ENCODE measurements at regions of chr6 and their contacts with region 1.

Region 1: DNA sequence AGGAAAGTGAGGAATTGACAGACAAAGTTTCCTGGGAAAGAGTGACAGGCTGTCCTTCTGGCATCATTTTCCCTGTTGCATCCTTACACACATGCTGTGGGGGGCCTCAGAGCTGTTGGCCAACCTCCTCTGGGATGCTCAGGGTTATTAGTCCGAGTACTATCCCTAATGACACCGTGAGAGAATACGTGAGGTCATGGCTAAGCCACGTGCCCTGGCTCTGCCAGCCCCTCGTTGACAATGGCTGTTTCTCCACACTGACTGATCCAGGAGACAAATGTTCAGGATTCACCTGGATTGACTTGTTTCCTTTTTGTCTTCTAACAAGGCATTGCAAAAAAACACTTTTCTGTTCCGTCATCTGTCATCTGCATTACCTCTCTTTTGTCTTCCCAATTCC is 604.6 kb downstream of the TFAP2A start:
- DNase-seq: no peak

Region 2: DNA sequence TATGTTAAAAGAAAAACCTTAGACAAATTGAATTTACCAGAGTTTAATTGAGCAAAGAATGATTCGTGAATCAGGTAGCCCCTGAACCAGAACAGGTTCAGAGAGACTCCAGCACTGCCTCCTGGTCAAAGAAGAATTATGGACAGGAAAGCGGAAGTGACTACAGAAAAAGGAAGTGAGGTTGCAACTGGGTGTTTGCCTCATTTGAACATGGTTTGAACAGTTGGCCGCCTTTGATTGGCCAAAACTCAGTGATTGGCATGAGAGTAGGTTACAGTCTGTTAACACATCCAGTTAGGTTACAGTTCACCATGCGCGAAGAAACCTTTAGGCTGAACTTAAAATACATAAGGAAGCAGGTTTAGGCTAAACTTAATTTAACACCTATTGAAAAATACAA is 355.8 kb after region 1 on chr6:
- intact Hi-C with region 1: loop called in 1 of 2 experiments (anchors 5 kb)
- DNase-seq: no peak